ENCODE measurements at regions of chr20 and their contacts with region 1.

Region 1: DNA sequence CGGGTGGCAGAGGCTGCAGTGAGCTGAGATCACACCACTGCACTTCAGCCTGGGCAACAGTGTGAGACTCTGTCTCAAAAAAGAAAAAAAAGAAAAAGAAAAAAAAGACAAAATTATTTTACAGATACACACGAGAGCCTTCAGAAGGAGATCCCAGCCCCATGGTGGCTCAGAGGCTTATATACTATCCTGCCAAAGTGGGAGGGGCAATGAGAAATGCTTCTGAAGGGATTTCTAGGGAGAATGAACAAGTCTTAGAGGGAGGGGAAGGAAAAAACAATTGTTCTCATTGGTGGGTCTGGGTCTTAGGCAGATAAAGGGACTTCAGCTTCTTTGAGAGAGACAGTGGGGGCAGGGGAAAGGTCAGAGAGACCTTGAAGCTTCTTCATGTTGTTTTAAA is 76.8 kb downstream of the BANF2 start:
- DNase-seq: no peak
- ATAC-seq: no peak
- H3K4me3 ChIP-seq: no peak overlapping the region
- H3K27ac ChIP-seq: no peak overlapping the region
- H3K4me1 ChIP-seq: no peaks in the 10 kb centered on the region
- H3K27me3 ChIP-seq: no peaks in the 10 kb centered on the region
- CTCF ChIP-seq: no peak

Region 2: GRCh38 chr20:17708670-17709360 is 67.7 kb before region 1 on chr20:
- intact Hi-C with region 1: loop called in 1 of 2 experiments (anchors 5 kb)
- DNase-seq: no peak
- ATAC-seq: no peak
- H3K4me3 ChIP-seq: no peak overlapping the region
- H3K27ac ChIP-seq: no peak overlapping the region
- H3K4me1 ChIP-seq: no peaks in the 10 kb centered on the region
- H3K27me3 ChIP-seq: no peaks in the 10 kb centered on the region
- CTCF ChIP-seq: no peak

Region 3: DNA sequence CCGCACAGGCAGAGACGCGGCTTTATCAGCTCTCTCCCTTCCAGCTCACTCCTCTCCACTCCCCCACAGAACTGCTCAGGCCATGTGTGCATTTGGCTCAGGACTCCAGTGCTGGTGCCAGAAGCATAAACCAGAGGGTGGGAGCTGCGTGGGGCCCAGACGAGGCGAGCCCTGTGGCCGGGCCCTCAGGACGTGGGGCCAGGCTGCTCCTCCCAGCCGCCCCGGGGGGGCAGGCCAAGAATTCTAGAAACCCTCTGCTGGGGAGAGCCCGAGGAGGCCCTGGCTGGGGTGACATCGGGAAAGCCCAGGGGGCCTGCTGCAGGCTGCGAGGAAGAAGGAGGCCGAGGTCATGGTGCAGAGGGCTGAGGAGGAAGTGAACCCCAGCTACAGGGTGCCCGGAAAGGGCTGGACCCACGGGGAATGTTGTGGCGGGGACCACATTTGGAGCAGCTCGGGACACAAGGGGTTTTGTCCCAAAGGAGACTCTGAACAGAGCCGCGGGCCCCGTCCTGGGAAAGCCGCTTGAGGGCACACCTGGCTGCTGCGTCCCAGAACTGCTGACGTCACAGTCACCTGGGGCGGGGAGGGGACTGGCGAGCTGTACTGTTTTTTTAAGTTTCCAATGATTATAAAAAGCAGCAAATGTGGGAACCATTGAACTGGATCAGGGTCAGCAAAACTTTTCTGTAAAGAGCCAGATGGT is 30.3 kb after region 1 on chr20:
- intact Hi-C with region 1: no loop called
- DNase-seq: peak; percentile 77 to 82
- ATAC-seq: peak; percentile 45 to 71 (median 56)
- H3K4me3 ChIP-seq: peak overlapping the region; percentile 25
- H3K27ac ChIP-seq: peak overlapping the region; percentile 46
- H3K4me1 ChIP-seq: peaks cover 5% of the 10 kb centered on the region
- H3K27me3 ChIP-seq: no peaks in the 10 kb centered on the region
- CTCF ChIP-seq: no peak